Activated T-helper 1 cell treated with anti-CD3 and anti-CD28 coated beads, Interleukin-12 subunit alpha, Interleukin-12 subunit beta, Interleukin-2, Interleukin-4 antibody, amounts not matched to agents 30 ng/mL and 10 ng/mL and 1 ng/mL, durations not matched to agents 14 hours and 24 hours and 36 hours (primary cell): ENCODE measurements at regions of chr10 and their contacts with region 1.

Region 1: DNA sequence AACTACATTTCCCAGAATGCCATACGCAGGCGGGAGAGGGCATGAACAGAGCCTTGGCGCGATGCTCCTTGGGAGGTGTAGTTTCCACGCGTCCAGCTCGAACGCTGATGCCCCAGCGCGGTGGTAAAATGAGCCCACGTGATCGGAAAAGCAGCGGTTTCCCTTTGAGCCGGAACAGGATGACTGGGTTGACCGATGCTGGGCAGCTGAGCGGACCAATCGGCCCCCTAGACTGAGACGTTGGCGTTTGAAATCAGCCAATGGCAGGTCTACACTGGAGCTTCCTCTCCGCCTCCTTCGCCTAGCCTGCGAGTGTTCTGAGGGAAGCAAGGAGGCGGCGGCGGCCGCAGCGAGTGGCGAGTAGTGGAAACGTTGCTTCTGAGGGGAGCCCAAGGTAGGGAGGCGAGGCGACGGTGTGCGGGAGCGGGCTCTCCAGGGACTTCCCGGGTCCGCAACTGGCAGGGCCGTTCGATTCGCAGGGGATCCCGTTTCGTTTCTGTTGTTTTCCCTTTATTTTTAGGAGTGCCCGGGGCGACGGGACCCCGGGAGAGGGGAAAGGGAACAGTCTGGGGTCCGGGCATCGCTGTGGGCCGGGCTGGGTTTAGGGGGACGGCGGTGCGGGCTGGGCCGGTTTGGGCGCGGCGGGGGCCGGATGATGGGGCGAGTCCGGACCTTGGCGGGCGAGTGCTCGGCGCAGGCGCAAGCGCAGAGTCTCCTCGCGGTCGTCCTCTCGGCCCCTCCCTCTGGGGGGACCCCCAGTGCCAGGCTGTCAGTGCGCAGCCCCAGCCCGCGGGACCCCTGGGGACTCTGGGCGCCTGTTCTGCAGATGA is at the start of gene BUB3:
- DNase-seq: peak; percentile 94
- H3K4me3 Mint-ChIP-seq: peak within 1 kb of the TSS; percentile 100
- H3K27ac Mint-ChIP-seq: peak within 1 kb of the TSS; percentile 100
- H3K4me1 Mint-ChIP-seq: peaks cover 61% of the 10 kb centered on the region
- H3K27me3 Mint-ChIP-seq: peaks cover 14% of the 10 kb centered on the region
- total RNA-seq, gene BUB3: 197 and 201 TPM in 2 replicates

Region 2: GRCh38 chr10:122879339-122880273 is 274.7 kb before region 1 on chr10 and contains the start of gene FAM24B:
- intact Hi-C with region 1: loop called (anchors 1 kb)
- DNase-seq: peak; percentile 94
- H3K4me3 Mint-ChIP-seq: peak within 1 kb of the TSS; percentile 97
- H3K27ac Mint-ChIP-seq: peak within 1 kb of the TSS; percentile 93
- H3K4me1 Mint-ChIP-seq: peaks cover 53% of the 10 kb centered on the region
- H3K27me3 Mint-ChIP-seq: no peaks in the 10 kb centered on the region
- total RNA-seq, gene FAM24B: 13.1 and 18.4 TPM in 2 replicates

Region 3: GRCh38 chr10:122980209-122981065 is 173.9 kb before region 1 on chr10 and contains the start of gene PSTK:
- intact Hi-C with region 1: loop called (anchors 1 kb)
- DNase-seq: peak; percentile 83
- H3K4me3 Mint-ChIP-seq: peak within 1 kb of the TSS; percentile 87
- H3K27ac Mint-ChIP-seq: peak within 1 kb of the TSS; percentile 97
- H3K4me1 Mint-ChIP-seq: peaks cover 22% of the 10 kb centered on the region
- H3K27me3 Mint-ChIP-seq: peaks cover 12% of the 10 kb centered on the region
- total RNA-seq, gene PSTK: 4.5 and 4.8 TPM in 2 replicates

Region 4: GRCh38 chr10:123016228-123016627 is 138.1 kb before region 1 on chr10:
- intact Hi-C with region 1: no loop called
- DNase-seq: no peak
- H3K4me3 Mint-ChIP-seq: no peak overlapping the region
- H3K27ac Mint-ChIP-seq: no peak overlapping the region
- H3K4me1 Mint-ChIP-seq: no peaks in the 10 kb centered on the region
- H3K27me3 Mint-ChIP-seq: no peaks in the 10 kb centered on the region

Region 5: DNA sequence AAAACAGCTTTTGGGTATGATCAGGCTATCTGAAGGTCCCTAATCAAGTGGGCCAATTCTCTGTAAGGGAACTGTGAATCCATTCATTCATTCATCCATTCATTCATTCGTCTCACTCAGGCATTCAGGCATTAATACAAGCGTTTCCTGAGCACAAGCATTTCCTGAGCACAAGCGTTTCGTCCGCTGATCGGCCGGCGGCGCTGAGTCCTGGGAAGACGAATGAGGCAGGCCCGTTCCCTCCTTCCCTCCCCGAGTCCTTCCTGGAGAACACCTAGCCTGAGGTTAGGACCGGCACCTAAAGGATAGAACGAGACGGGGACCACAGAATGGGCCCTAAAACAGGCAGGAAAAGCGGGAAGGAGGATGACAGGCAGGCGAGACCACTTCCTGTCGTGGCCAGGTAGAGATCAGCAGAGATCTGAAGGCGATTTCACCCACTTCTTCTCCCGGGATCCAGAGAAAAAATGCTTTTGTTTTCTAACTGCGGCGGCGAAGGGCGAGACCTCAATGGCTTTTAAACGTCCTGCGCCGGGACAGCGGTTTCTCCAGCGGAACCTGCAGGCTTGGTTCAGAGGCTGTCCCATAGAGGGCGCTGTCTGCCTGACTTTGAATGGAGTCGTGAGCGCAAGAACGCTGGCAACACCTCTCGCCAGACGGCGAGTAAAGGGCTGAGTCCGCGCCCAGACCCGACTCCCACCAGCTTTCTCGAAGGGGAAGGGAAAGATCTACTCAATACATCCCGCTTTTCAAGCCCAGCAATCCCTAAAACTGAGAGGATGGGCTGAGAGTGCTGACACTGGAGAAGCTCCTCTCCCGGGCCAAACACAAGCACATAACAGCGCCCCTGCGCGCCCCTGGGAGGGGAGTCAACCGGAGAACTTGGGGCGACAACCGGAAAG is 21.5 kb before region 1 on chr10:
- intact Hi-C with region 1: loop called (anchors 1 kb)
- DNase-seq: peak; percentile 74
- H3K4me3 Mint-ChIP-seq: peak overlapping the region; percentile 48
- H3K27ac Mint-ChIP-seq: peak overlapping the region; percentile 85
- H3K4me1 Mint-ChIP-seq: peaks cover 23% of the 10 kb centered on the region
- H3K27me3 Mint-ChIP-seq: peaks cover 74% of the 10 kb centered on the region

Region 6: GRCh38 chr10:124221356-124222317 is 1067.3 kb after region 1 on chr10:
- intact Hi-C with region 1: loop called (anchors 10 kb)
- DNase-seq: no peak
- H3K4me3 Mint-ChIP-seq: no peak overlapping the region
- H3K27ac Mint-ChIP-seq: peak overlapping the region; percentile 58
- H3K4me1 Mint-ChIP-seq: peaks cover 25% of the 10 kb centered on the region
- H3K27me3 Mint-ChIP-seq: peaks cover 13% of the 10 kb centered on the region

Region 7: DNA sequence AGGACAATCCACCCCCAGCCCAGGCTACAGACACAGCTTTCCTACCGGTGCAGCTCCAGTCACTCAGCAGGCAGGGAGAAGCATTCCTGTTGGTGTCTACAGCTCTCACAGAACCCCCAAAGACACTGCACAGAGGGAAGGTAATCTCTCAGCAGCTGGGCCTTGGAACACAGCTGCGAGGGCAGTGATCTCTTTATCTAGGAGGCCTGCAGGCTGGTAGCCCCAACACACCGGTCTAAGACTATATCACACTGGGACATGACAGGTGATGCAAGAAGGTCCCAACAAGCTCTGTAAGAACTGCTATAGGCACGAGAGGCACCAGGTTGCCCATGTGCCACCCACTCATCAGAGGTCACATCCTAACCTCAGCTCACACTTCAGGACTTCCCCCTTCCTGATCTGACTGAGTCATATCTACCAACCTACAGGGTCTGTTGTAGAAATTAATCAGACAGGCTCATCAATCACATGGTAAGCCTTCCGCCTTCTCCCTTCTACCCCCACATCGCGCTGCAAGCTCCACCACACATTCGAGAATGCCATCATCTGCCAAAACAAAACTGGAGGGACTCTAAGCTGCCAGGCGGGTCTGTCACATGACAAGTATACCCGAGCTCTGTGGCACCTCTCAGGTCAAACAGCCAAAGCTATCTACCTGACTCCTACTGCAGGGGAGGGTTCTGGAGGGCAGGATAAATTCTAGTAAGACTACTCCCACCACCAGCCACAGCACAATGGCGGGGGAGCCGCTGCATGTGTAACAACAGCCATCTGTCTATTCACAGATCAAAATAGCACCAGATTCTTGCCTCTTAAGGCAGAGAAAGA is 1563.8 kb after region 1 on chr10:
- intact Hi-C with region 1: loop called (anchors 10 kb)
- DNase-seq: peak; percentile 64
- H3K4me3 Mint-ChIP-seq: peak overlapping the region; percentile 73
- H3K27ac Mint-ChIP-seq: peak overlapping the region; percentile 79
- H3K4me1 Mint-ChIP-seq: peaks cover 88% of the 10 kb centered on the region
- H3K27me3 Mint-ChIP-seq: peaks cover 6% of the 10 kb centered on the region